ENCODE measurements at regions of chr3 and their contacts with region 1.

Region 1: GRCh38 chr3:101573449-101574387 is at the start of gene PCNP:
- DNase-seq: peak; percentile 100
- H3K4me3 Mint-ChIP-seq: peak within 1 kb of the TSS; percentile 91
- H3K27ac Mint-ChIP-seq: peak within 1 kb of the TSS; percentile 94
- H3K4me1 Mint-ChIP-seq: peaks cover 61% of the 10 kb centered on the region
- H3K27me3 Mint-ChIP-seq: no peaks in the 10 kb centered on the region
- total RNA-seq, gene PCNP: 231 to 236 TPM

Region 2: DNA sequence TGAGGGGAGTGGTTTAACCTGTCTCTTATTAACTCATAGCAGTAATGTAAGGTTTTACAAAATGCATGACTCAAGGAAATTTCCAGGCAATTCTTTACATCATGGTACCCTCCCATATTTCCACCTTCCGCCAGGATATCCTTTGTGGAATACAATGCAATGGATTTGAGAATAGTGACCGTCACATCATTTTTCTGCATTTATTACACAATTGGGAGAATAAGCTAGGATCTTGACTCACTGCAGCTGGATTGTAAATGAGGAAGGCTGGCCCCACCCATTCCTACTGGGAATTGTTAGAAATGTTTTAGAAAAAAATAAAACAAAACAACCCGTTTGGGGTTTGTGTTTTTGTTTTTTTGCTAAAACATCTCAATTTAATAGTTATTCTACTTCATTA is 350.7 kb before region 1 on chr3:
- CTCF ChIA-PET with region 1: no interaction called
- POLR2A ChIA-PET with region 1: no interaction called
- intact Hi-C with region 1: loop called (anchors 5 kb)
- DNase-seq: no peak
- H3K4me3 Mint-ChIP-seq: no peak overlapping the region
- H3K27ac Mint-ChIP-seq: no peak overlapping the region
- H3K4me1 Mint-ChIP-seq: peaks cover 15% of the 10 kb centered on the region
- H3K27me3 Mint-ChIP-seq: no peaks in the 10 kb centered on the region

Region 3: GRCh38 chr3:101303089-101303731 is 270.5 kb before region 1 on chr3:
- CTCF ChIA-PET with region 1: no interaction called
- POLR2A ChIA-PET with region 1: no interaction called
- intact Hi-C with region 1: no loop called
- DNase-seq: no peak
- H3K4me3 Mint-ChIP-seq: no peak overlapping the region
- H3K27ac Mint-ChIP-seq: no peak overlapping the region
- H3K4me1 Mint-ChIP-seq: no peaks in the 10 kb centered on the region
- H3K27me3 Mint-ChIP-seq: no peaks in the 10 kb centered on the region

Region 4: GRCh38 chr3:101512646-101513418 is 60.9 kb before region 1 on chr3 and contains the start of gene SENP7:
- CTCF ChIA-PET with region 1: interaction called, 9 read pairs
- POLR2A ChIA-PET with region 1: interaction called, 18 read pairs
- intact Hi-C with region 1: loop called (anchors 1 kb)
- DNase-seq: peak; percentile 86
- H3K4me3 Mint-ChIP-seq: peak within 1 kb of the TSS; percentile 99
- H3K27ac Mint-ChIP-seq: peak within 1 kb of the TSS; percentile 99
- H3K4me1 Mint-ChIP-seq: peaks cover 44% of the 10 kb centered on the region
- H3K27me3 Mint-ChIP-seq: no peaks in the 10 kb centered on the region
- total RNA-seq, gene SENP7: 15.8 to 18.4 TPM

Region 5: GRCh38 chr3:101635954-101636798 is 62.5 kb after region 1 on chr3:
- CTCF ChIA-PET with region 1: interaction called, 4 read pairs
- POLR2A ChIA-PET with region 1: no interaction called
- intact Hi-C with region 1: loop called (anchors 1 kb)
- DNase-seq: peak; percentile 85
- H3K4me3 Mint-ChIP-seq: no peak overlapping the region
- H3K27ac Mint-ChIP-seq: no peak overlapping the region
- H3K4me1 Mint-ChIP-seq: no peaks in the 10 kb centered on the region
- H3K27me3 Mint-ChIP-seq: no peaks in the 10 kb centered on the region

Region 6: GRCh38 chr3:101685870-101686412 is 112.2 kb after region 1 on chr3:
- CTCF ChIA-PET with region 1: interaction called, 9 read pairs
- POLR2A ChIA-PET with region 1: interaction called, 8 read pairs
- intact Hi-C with region 1: loop called (anchors 1 kb)
- DNase-seq: no peak
- H3K4me3 Mint-ChIP-seq: peak overlapping the region; percentile 99
- H3K27ac Mint-ChIP-seq: peak overlapping the region; percentile 99
- H3K4me1 Mint-ChIP-seq: peaks cover 40% of the 10 kb centered on the region
- H3K27me3 Mint-ChIP-seq: no peaks in the 10 kb centered on the region

Region 7: GRCh38 chr3:101827211-101828174 is 253.8 kb after region 1 on chr3:
- CTCF ChIA-PET with region 1: no interaction called
- POLR2A ChIA-PET with region 1: no interaction called
- intact Hi-C with region 1: loop called (anchors 5 kb)
- DNase-seq: peak; percentile 95
- H3K4me3 Mint-ChIP-seq: peak overlapping the region; percentile 85
- H3K27ac Mint-ChIP-seq: peak overlapping the region; percentile 96
- H3K4me1 Mint-ChIP-seq: peaks cover 63% of the 10 kb centered on the region
- H3K27me3 Mint-ChIP-seq: no peaks in the 10 kb centered on the region